Posterior vena cava (tissue), 2 donors: ENCODE measurements at regions of chr14 and their contacts with region 1.

Region 1: GRCh38 chr14:84237881-84238280 is 1292.1 kb upstream of the FLRT2 start:
- DNase-seq: no peak

Region 2: GRCh38 chr14:83255015-83255726 is 982.7 kb before region 1 on chr14:
- intact Hi-C with region 1: no loop called
- DNase-seq: no peak

Region 3: DNA sequence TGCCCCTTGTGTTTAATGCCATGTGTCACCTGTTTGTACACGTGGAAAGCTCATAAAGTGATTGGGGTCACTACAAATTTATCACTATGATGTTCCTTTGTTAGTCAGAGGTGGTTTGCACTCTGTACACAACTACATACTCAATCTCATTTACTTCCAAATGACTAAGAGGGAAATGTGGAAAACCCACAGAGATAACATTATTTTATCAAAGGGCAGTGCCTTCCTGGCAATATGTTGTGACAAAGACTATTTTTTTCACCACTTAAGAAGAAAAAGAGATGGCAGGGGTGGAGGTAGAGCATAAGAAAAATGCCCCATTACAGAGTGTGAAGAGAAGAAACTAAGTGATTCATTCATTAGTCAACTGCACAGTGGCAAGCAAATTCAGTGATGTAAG is 228.0 kb after region 1 on chr14:
- intact Hi-C with region 1: loop called in 1 of 2 experiments (anchors 5 kb)
- DNase-seq: no peak